A673 (cell line): ENCODE measurements at regions of chr1 and their contacts with region 1.

Region 1: GRCh38 chr1:172144445-172145061 is 275.9 kb upstream of the C1orf105 start:
- DNase-seq: peak; percentile 99
- H3K4me3 ChIP-seq: peak overlapping the region; percentile 65
- H3K27ac ChIP-seq: peak overlapping the region; percentile 93
- H3K4me1 ChIP-seq: peaks cover 74% of the 10 kb centered on the region
- H3K27me3 ChIP-seq: no peaks in the 10 kb centered on the region
- CTCF ChIP-seq: no peak

Region 2: DNA sequence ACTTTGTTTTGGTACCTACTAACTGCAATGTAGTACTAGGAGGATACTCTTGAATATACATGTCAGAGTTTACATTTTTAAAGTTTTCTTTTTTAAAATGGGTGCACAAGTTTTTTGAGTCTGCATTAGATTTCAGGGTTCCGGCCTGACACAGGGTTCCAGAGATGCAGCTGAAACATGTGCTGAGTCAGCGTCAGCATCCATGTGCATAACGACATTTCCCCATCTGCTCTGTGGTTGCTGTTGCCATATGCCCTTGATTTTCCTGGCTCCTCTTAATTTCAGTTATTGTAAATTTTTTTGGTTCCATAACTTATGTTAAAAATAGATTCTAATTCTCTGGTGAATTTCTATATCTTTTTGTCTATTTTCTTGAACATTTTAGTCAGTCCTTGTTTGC is 375.4 kb before region 1 on chr1:
- CTCF ChIA-PET with region 1: no interaction called
- POLR2A ChIA-PET with region 1: no interaction called
- intact Hi-C with region 1: no loop called
- DNase-seq: no peak
- H3K4me3 ChIP-seq: no peak overlapping the region
- H3K27ac ChIP-seq: no peak overlapping the region
- H3K4me1 ChIP-seq: no peaks in the 10 kb centered on the region
- H3K27me3 ChIP-seq: no peaks in the 10 kb centered on the region
- CTCF ChIP-seq: no peak

Region 3: DNA sequence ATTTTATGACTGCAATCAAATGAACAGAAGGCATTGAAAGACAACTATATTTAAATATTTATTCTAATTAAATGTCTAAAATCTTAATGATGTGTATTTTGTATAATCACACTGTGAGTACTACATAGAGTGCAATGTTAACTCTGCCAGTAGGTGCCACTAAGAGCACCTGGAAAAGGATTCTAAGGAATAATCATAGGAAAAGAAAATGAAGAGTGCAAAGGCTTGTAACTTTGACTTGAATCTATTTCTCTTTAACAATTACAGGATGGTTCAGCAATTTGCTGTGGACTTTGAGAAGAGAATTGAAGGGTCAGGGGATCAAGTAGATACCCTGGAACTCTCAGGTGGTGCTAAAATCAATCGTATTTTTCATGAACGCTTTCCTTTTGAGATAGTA is 102.8 kb before region 1 on chr1:
- CTCF ChIA-PET with region 1: no interaction called
- POLR2A ChIA-PET with region 1: interaction called, 5 read pairs
- intact Hi-C with region 1: loop called (anchors 5 kb)
- DNase-seq: peak; percentile 40
- H3K4me3 ChIP-seq: no peak overlapping the region
- H3K27ac ChIP-seq: no peak overlapping the region
- H3K4me1 ChIP-seq: peaks cover 24% of the 10 kb centered on the region
- H3K27me3 ChIP-seq: no peaks in the 10 kb centered on the region
- CTCF ChIP-seq: peak; percentile 60

Region 4: GRCh38 chr1:172109359-172109758 is 35.2 kb before region 1 on chr1:
- CTCF ChIA-PET with region 1: no interaction called
- POLR2A ChIA-PET with region 1: interaction called, 3 read pairs
- intact Hi-C with region 1: loop called (anchors 2 kb)
- DNase-seq: peak; percentile 96
- H3K4me3 ChIP-seq: no peak overlapping the region
- H3K27ac ChIP-seq: peak overlapping the region; percentile 90
- H3K4me1 ChIP-seq: peaks cover 64% of the 10 kb centered on the region
- H3K27me3 ChIP-seq: no peaks in the 10 kb centered on the region
- CTCF ChIP-seq: no peak

Region 5: GRCh38 chr1:172246521-172247390 is 102.2 kb after region 1 on chr1:
- CTCF ChIA-PET with region 1: no interaction called
- POLR2A ChIA-PET with region 1: no interaction called
- intact Hi-C with region 1: no loop called
- DNase-seq: no peak
- H3K4me3 ChIP-seq: no peak overlapping the region
- H3K27ac ChIP-seq: no peak overlapping the region
- H3K4me1 ChIP-seq: no peaks in the 10 kb centered on the region
- H3K27me3 ChIP-seq: no peaks in the 10 kb centered on the region
- CTCF ChIP-seq: no peak

Region 6: DNA sequence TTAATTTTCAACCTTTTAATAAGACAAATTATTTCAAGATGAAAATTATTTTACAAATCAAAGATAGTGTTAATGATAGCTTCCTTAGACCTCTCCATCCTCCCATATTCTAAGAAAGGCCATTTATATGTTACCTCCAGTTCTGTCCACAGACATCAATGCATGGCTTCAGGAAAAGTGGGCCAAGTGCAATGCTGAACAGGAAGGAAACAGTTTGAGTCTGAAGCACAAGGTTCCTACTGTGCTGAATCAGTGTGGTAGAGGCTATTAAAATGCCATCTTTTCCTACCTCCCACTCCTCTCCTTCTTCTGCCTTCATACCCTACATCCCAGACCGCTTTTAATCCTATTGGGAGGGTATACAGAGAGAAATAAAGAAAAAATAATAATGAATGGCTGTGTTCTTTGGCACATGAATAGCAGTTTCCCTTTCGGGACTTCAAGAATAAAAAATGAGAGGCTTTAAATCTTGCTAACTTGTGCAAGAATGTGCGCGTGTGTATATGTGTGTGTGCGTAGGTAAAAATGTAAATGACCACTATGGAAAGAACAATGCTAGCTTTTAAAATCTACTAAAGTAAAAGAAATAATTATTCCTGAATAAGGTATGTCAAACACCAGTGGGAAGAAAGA is 213.3 kb after region 1 on chr1:
- CTCF ChIA-PET with region 1: no interaction called
- POLR2A ChIA-PET with region 1: interaction called, 3 read pairs
- intact Hi-C with region 1: loop called (anchors 2 kb)
- DNase-seq: peak; percentile 86
- H3K4me3 ChIP-seq: peak overlapping the region; percentile 33
- H3K27ac ChIP-seq: peak overlapping the region; percentile 87
- H3K4me1 ChIP-seq: peaks cover 63% of the 10 kb centered on the region
- H3K27me3 ChIP-seq: no peaks in the 10 kb centered on the region
- CTCF ChIP-seq: no peak

Region 7: DNA sequence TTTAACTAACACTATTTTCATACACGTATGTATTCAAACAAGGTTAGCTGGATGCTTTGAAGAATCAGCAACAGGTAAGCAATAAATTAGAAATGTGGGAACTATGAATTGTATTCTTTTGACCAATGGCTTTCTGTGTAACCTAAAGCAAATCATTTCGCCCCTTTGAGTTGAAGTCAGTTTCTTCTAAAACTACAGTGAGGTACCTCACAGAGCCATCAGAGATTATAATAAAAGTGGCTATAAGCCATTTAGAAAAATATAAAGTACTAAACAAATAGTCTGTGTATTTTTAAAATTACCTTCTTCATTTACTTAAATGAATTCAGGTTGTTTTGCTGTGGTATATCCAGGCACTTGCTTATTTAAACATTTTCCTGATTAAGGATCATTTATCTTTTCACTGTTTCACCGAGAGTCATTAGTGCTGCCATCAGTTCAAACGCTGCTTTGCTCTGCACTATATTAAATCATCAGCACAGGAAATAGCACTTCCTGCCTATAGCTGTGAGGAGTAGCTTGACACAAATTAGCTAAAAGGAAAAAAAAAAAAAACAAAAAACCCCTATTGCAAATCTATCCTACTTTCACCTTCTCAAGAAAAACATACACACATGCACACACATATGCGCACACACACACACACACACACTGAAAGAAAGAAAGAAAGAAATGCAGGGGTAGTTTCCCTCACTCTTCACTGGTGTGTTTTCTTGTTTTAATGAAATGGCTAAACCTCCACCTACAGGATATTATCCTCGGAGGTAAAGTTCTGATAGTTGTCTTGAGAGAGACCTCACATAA is 236.1 kb after region 1 on chr1:
- CTCF ChIA-PET with region 1: no interaction called
- POLR2A ChIA-PET with region 1: no interaction called
- intact Hi-C with region 1: loop called (anchors 5 kb)
- DNase-seq: peak; percentile 92
- H3K4me3 ChIP-seq: peak overlapping the region; percentile 5
- H3K27ac ChIP-seq: peak overlapping the region; percentile 69
- H3K4me1 ChIP-seq: peaks cover 74% of the 10 kb centered on the region
- H3K27me3 ChIP-seq: no peaks in the 10 kb centered on the region
- CTCF ChIP-seq: no peak

Region 8: GRCh38 chr1:172398970-172399755 is 254.6 kb after region 1 on chr1:
- CTCF ChIA-PET with region 1: no interaction called
- POLR2A ChIA-PET with region 1: no interaction called
- intact Hi-C with region 1: loop called (anchors 2 kb)
- DNase-seq: peak; percentile 88
- H3K4me3 ChIP-seq: no peak overlapping the region
- H3K27ac ChIP-seq: peak overlapping the region; percentile 39
- H3K4me1 ChIP-seq: peaks cover 21% of the 10 kb centered on the region
- H3K27me3 ChIP-seq: no peaks in the 10 kb centered on the region
- CTCF ChIP-seq: peak; percentile 75

Region 9: DNA sequence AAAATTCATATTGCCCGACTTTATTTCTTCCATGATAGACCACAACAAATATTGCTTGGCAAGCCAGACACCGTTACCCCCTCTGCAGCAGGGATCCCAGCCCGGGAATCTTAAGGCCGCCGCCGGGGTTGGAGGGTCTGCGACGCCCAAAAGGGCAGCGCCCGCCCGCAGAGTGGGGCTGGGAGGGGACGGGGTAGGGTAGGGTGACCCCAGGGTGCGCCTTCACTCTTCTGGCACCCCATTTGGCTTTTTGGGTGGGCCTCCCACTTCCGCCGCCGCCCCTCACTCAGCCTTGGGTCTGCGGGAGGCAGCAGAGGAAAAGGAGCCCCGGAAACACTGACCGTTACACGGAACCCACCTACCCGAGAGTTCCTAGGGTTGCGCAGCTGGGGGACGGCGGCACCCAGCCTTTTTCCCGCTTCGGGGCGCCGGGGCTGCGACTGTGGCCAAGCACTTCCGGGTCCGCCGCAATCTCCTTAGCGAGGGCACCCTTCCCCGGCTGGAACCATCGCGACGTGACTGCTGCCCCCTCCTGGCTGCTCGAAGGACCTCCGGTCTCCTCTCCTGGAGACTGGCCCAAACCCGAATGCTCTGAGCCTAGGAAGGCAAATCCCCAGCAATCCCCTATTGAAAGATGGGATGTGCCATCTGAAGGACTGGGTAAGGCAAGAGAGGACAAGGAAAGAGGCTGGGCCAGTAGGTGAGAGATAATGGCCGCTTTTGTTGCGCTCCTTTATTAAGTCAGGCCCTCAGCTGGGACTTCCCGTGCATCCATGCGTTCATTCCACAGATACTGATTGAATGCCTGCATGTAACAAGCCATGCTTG is 299.3 kb after region 1 on chr1 and contains the start of gene PIGC:
- CTCF ChIA-PET with region 1: interaction called, 11 read pairs
- POLR2A ChIA-PET with region 1: no interaction called
- intact Hi-C with region 1: no loop called
- DNase-seq: peak; percentile 94
- H3K4me3 ChIP-seq: peak within 1 kb of the TSS; percentile 86
- H3K27ac ChIP-seq: peak within 1 kb of the TSS; percentile 91
- H3K4me1 ChIP-seq: peaks cover 6% of the 10 kb centered on the region
- H3K27me3 ChIP-seq: no peaks in the 10 kb centered on the region
- CTCF ChIP-seq: peak; percentile 97
- total RNA-seq, gene PIGC: 21.0 and 23.6 TPM in 2 replicates